ENCODE measurements at regions of chr11 and their contacts with region 1.

Region 1: GRCh38 chr11:13210424-13210823 is 67.2 kb upstream of the BMAL1 start:
- DNase-seq: peak; percentile 62
- H3K4me3 ChIP-seq: no peak overlapping the region
- H3K27ac ChIP-seq: no peak overlapping the region
- H3K4me1 ChIP-seq: peaks cover 0 to 13% of the 10 kb centered on the region in 2 experiments; a peak in 3 of 4 replicates
- H3K27me3 ChIP-seq: no peaks in the 10 kb centered on the region
- CTCF ChIP-seq: peak; percentile 86
- EP300 ChIP-seq: no peak
- RAD21 ChIP-seq: peak; percentile 96

Region 2: DNA sequence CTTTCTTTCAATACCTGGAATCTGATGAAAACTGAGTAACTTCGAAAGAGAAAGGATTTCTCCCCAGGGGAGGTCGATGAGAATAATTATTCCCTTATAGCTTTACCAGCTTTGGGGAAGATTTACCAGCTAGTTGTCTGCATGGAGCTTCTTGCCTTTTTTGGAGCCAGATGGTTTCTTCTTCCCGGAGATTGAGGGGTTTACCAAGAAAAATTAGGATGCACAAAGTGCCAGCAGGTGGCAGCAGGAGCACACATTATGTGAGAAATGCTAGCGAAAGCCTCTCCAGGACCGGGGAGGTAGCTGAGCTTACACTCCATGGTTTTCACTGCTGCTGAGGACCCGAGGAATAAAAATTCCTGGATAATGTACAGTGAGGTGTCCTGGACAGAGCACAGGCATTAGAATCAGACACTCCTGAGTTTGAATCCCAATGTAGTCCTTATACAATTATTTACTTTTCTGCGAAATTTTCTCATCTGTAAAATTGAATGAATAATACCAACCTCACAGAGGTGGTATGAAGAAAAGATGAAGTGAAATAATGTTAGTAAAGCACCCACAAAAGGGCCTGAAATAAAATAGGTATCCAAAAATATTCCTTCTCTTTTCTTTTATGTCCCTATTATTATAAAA is 879.1 kb before region 1 on chr11:
- CTCF ChIA-PET with region 1: interaction called, 10 read pairs
- POLR2A ChIA-PET with region 1: no interaction called
- DNase-seq: peak; percentile 70
- H3K4me3 ChIP-seq: peak overlapping the region in 1 of 2 experiments; percentile 34; a peak in 1 of 4 replicates
- H3K27ac ChIP-seq: no peak overlapping the region; a peak in 1 of 4 replicates
- H3K4me1 ChIP-seq: peaks cover 10 to 16% of the 10 kb centered on the region in 2 experiments; a peak in 3 of 4 replicates
- H3K27me3 ChIP-seq: no peaks in the 10 kb centered on the region
- CTCF ChIP-seq: peak; percentile 85
- EP300 ChIP-seq: no peak
- RAD21 ChIP-seq: peak; percentile 99

Region 3: GRCh38 chr11:13189561-13190426 is 20.6 kb before region 1 on chr11:
- CTCF ChIA-PET with region 1: interaction called, 13 read pairs
- POLR2A ChIA-PET with region 1: no interaction called
- DNase-seq: no peak
- H3K4me3 ChIP-seq: no peak overlapping the region
- H3K27ac ChIP-seq: no peak overlapping the region; a peak in 1 of 4 replicates
- H3K4me1 ChIP-seq: no peaks in the 10 kb centered on the region
- H3K27me3 ChIP-seq: no peaks in the 10 kb centered on the region
- CTCF ChIP-seq: no peak
- EP300 ChIP-seq: no peak
- RAD21 ChIP-seq: no peak

Region 4: DNA sequence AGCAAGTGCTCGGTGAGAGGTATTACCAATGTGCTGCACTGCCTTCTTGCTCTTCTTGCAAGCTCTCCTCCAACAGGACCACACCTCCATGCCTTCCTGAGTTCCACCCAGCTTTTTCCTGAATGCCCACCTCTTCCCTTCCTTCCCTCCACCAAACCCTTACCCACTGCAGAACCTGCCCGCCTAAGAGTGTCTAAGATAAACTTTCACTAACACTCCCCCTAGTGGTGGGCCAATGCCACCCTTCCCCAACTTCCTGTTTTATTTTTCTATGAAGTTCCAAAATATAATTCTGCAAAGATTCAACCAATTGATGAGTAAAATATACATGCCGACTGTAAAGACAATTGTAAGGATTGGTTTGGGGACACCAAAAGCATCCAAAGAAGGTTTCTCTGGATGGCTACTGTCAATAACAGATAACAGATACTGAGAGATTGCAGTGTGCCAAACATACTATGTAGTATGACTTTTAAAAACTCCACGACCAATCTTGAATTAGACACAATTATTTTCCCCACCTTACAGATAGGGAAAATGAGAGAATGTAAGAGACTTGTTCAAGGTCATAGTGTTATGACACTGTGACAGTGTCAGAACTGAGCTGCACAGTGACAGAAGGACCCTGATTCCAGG is 28.6 kb after region 1 on chr11:
- CTCF ChIA-PET with region 1: interaction called, 36 read pairs
- POLR2A ChIA-PET with region 1: no interaction called
- DNase-seq: peak; percentile 32
- H3K4me3 ChIP-seq: no peak overlapping the region; a peak in 1 of 4 replicates
- H3K27ac ChIP-seq: no peak overlapping the region
- H3K4me1 ChIP-seq: no peaks in the 10 kb centered on the region
- H3K27me3 ChIP-seq: no peaks in the 10 kb centered on the region
- CTCF ChIP-seq: peak; percentile 91
- EP300 ChIP-seq: no peak
- RAD21 ChIP-seq: peak; percentile 67

Region 5: DNA sequence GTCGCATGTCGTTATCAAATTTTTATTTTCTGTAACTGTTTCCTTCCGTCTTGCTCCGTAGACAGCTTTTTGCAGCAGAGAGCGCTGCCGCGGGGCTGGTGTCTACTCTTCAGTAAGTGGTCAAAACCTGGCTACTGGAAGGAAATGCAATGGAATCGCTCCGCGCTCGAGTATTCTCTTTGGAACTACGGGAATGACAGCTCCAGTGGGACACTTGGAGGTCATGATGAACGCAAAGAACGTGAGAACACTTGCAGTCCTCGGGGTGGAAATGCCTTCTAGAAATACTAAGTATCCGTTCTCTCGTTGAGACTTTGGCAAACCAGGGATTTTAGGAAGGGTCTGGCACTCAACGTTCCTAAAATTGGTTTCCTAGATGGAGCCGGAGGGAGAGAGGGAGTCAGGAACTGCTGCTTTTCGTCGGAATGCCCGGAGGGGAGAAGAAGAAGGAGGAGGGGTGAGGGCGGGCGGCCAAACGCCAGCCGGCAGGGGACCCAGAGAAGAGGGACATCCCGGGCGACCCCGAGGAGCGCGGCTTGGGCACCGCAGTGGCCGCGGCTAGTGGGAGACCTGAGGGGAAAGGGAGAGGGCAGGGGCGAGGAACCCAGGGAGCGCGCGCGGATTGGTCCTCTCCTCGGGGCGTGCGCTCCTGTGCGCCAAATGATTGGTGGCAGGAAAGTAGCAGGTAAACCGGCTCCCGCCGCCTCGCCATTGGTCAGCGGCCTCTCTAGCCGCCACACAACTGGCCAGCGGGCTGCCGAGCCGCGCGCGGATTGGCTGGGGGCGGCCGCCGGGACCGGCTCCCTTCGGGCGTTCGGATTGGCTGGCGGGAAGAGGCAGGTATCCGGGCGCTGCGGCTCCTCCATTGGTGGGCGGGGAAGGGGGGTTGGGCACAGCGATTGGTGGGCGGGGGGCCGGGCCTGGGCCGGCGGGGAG is 66.7 kb after region 1 on chr11:
- CTCF ChIA-PET with region 1: interaction called, 23 read pairs
- POLR2A ChIA-PET with region 1: no interaction called
- DNase-seq: peak; percentile 99
- H3K4me3 ChIP-seq: peak overlapping the region; percentile 76 to 88
- H3K27ac ChIP-seq: peak overlapping the region; percentile 74 to 82
- H3K4me1 ChIP-seq: peaks cover 0 to 15% of the 10 kb centered on the region in 2 experiments; a peak in 2 of 4 replicates
- H3K27me3 ChIP-seq: no peaks in the 10 kb centered on the region
- CTCF ChIP-seq: no peak
- EP300 ChIP-seq: no peak
- RAD21 ChIP-seq: peak; percentile 17

Region 6: DNA sequence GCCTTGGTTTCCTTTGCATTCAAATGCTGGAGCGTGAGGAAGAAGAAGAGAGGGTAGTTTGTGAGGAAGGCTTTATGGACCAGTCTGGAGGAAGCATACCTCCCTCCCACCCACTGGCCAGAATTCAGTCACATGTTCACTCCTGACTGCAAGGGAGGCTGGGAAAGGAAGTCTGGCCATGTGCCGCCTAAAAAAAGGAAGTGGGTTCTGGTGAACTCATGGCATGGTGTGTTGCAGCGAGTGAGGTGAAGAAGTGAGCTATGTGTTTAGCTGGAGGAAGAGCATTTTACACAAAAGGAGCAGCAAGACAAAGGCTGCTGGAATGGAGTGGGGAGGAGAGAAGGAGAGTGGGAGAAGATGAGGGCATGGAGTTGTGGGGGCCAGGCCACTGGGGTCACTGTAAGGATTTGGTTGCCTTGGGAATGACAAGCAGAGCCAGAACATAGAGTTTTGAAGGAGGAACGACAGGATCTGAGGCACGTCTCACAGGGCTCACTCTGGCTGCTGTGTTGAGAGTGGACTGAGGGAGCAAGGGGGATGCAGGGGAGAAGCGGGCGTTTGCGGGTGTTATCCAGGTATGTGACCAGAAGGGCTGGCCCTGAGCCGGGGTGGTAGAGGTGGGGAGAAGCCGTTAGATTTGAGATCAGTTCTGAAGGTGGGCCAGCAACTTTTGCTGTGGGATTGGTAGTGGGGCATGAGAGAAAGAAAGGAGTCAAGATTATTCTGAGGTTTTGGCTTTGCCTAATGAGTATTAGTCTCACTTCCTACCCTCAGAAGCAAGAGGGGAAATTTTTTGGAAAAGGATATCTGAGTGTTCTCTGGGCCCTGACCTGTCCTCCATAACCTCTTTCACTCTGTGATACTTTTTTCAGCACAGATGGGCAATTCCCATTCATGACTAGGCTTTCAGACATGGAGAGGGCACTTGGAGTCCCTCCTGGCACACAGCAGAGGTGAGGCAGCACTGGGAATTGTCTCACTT is 93.5 kb after region 1 on chr11:
- CTCF ChIA-PET with region 1: interaction called, 40 read pairs
- POLR2A ChIA-PET with region 1: no interaction called
- DNase-seq: no peak
- H3K4me3 ChIP-seq: no peak overlapping the region
- H3K27ac ChIP-seq: no peak overlapping the region
- H3K4me1 ChIP-seq: peaks cover 0 to 22% of the 10 kb centered on the region in 2 experiments; a peak in 1 of 4 replicates
- H3K27me3 ChIP-seq: no peaks in the 10 kb centered on the region
- CTCF ChIP-seq: no peak
- EP300 ChIP-seq: no peak
- RAD21 ChIP-seq: no peak

Region 7: DNA sequence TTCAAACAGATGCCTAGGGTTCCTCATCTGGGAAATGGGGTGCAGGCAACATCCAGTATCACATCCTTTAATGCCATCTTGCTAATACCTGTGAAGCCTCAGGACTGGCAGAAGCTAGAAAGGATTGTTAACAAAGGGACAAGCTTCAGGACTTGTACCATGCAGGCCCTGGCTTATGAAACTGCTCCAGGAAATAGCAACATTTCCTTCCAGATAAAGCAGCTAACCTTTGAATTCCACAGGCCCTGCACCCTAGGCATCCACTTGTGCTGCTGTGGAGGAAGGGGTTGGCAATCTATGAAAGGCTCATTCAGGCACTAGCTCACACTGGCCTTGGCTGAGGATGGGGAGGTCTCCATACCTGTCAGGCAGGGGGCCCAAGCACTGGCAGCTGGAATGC is 165.4 kb after region 1 on chr11:
- CTCF ChIA-PET with region 1: interaction called, 91 read pairs
- POLR2A ChIA-PET with region 1: no interaction called
- DNase-seq: no peak
- H3K4me3 ChIP-seq: no peak overlapping the region
- H3K27ac ChIP-seq: no peak overlapping the region
- H3K4me1 ChIP-seq: no peaks in the 10 kb centered on the region
- H3K27me3 ChIP-seq: no peaks in the 10 kb centered on the region
- CTCF ChIP-seq: no peak
- EP300 ChIP-seq: no peak
- RAD21 ChIP-seq: no peak